H1 (cell line): ENCODE measurements at regions of chr16 and their contacts with region 1.

Region 1: DNA sequence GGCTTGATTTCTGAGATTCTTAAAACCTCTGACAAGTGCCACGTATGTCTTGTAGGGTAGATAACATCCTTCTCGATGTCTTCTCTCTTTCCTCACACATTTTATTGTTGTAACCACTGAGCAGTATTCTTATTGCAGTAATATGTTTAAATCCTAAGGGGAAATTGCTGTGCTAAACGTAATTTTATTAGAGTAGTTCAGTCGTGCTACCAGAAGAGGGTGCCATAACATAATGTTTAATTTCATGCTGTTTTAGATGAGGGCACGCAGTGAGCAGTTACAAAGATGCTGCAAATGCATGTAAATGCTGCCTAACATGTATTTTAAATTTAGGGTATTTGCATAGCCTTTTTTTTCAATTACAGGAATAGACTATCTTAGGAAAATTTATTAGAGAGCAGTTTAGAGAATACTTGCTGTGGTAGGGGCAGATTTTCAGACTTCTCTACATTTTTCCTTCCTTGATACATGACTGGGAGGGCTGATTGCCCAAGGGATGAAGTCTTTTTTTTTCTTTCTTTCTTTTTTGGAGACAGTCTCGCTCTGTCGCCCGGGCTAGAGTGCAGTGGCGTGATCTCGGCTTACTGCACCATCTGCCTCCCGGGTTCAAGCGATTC is 51.7 kb downstream of the GAN start:
- DNase-seq: no peak
- H3K4me3 ChIP-seq: no peak overlapping the region
- H3K27ac ChIP-seq: no peak overlapping the region
- H3K4me1 ChIP-seq: no peaks in the 10 kb centered on the region
- H3K27me3 ChIP-seq: no peaks in the 10 kb centered on the region
- CTCF ChIP-seq: peak in 2 of 3 experiments; percentile 43 to 56; a peak in 2 of 4 replicates
- EP300 ChIP-seq: no peak
- POLR2A ChIP-seq: no peak
- RAD21 ChIP-seq: peak; percentile 78 to 83

Region 2: GRCh38 chr16:81376880-81377279 is 10.5 kb after region 1 on chr16:
- CTCF ChIA-PET with region 1: interaction called, 12 read pairs
- POLR2A ChIA-PET with region 1: interaction called, 4 read pairs
- DNase-seq: no peak
- H3K4me3 ChIP-seq: no peak overlapping the region
- H3K27ac ChIP-seq: no peak overlapping the region
- H3K4me1 ChIP-seq: no peaks in the 10 kb centered on the region
- H3K27me3 ChIP-seq: no peaks in the 10 kb centered on the region
- CTCF ChIP-seq: no peak
- EP300 ChIP-seq: no peak
- POLR2A ChIP-seq: no peak
- RAD21 ChIP-seq: no peak

Region 3: DNA sequence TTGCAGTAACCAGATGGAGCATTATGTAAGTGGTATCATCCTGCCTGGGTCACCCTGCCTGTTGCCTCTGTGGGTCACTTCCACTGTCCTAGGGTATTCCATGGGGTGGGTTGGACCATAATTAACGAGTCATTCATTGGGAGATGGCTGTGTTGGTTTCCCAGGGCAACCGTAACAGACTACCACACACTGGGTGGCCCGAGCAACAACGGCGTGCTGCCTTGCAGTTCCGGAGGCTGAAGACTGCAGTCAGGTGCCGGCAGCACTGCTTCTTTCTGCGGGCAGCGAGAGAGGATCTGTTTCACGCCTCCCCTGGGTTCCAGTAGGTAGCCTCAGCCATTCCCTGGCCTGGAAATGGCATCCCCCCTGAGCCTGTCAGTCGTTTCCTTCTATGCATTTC is 49.3 kb after region 1 on chr16:
- CTCF ChIA-PET with region 1: no interaction called
- POLR2A ChIA-PET with region 1: no interaction called
- DNase-seq: no peak
- H3K4me3 ChIP-seq: no peak overlapping the region
- H3K27ac ChIP-seq: no peak overlapping the region
- H3K4me1 ChIP-seq: peaks cover 0 to 13% (median 5%) of the 10 kb centered on the region in 4 experiments; a peak in 6 of 7 replicates
- H3K27me3 ChIP-seq: no peaks in the 10 kb centered on the region
- CTCF ChIP-seq: no peak
- EP300 ChIP-seq: no peak
- POLR2A ChIP-seq: no peak
- RAD21 ChIP-seq: no peak